AG04449 (cell line): ENCODE measurements at regions of chr5 and their contacts with region 1.

Region 1: GRCh38 chr5:140632150-140633020 is 590 bp downstream of the CD14 start:
- DNase-seq: no peak
- H3K4me3 ChIP-seq: peak overlapping the region; percentile 56
- CTCF ChIP-seq: no peak

Region 2: DNA sequence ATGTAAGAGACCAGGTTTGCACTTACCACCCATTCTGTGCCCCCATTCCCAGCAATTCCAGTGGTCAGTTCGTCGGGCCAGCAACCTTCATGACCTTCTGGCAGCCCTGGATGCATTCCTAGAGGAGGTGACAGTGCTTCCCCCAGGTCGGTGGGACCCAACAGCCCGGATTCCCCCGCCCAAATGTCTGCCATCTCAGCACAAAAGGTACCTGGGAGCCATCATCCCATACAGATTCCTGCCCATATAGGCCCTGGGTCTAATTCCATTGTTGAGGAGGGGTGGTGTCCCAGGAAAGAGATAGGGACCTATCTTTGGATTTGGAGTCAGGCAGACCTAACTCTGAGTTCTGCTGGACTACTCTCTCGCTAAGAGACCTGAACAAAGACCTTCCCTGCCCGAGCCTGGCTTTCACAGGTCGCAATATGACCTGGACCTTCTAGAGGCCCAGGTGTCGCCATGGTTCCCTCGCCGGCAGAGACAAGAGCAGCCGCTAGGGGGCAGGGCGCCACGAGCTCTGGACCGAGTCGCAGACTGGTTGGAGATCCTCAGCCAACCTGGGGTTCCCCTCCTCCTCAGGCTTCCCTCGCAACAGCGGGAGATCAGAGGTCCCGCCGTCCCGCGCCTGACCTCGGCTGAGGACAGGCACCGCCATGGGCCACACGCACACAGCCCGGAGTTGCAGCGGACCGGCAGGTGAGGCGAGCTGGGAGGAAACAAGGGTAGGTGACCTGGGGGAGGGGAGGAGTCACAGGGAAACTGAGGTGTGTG is 269.3 kb before region 1 on chr5:
- CTCF ChIA-PET with region 1: interaction called, 14 read pairs
- POLR2A ChIA-PET with region 1: no interaction called
- DNase-seq: no peak
- H3K4me3 ChIP-seq: peak overlapping the region; percentile 54
- CTCF ChIP-seq: peak; percentile 98

Region 3: GRCh38 chr5:140497897-140498296 is 134.5 kb before region 1 on chr5:
- CTCF ChIA-PET with region 1: no interaction called
- POLR2A ChIA-PET with region 1: no interaction called
- DNase-seq: no peak
- H3K4me3 ChIP-seq: no peak overlapping the region
- CTCF ChIP-seq: no peak

Region 4: GRCh38 chr5:140547508-140548299 is 84.7 kb before region 1 on chr5 and contains the start of gene EIF4EBP3:
- CTCF ChIA-PET with region 1: interaction called, 36 read pairs
- POLR2A ChIA-PET with region 1: interaction called, 3 read pairs
- DNase-seq: peak; percentile 77
- H3K4me3 ChIP-seq: peak within 1 kb of the TSS; percentile 49
- CTCF ChIP-seq: peak; percentile 70

Region 5: GRCh38 chr5:140557136-140557805 is 75.1 kb before region 1 on chr5 and contains the start of gene SRA1:
- CTCF ChIA-PET with region 1: interaction called, 16 read pairs
- POLR2A ChIA-PET with region 1: interaction called, 3 read pairs
- DNase-seq: no peak
- H3K4me3 ChIP-seq: peak within 1 kb of the TSS; percentile 86
- CTCF ChIP-seq: peak; percentile 4

Region 6: GRCh38 chr5:140564196-140565023 is 68.0 kb before region 1 on chr5 and contains the starts of genes APBB3 and SLC35A4:
- CTCF ChIA-PET with region 1: interaction called, 13 read pairs
- POLR2A ChIA-PET with region 1: no interaction called
- DNase-seq: peak; percentile 94
- H3K4me3 ChIP-seq: peak within 1 kb of the TSS; percentile 96
- CTCF ChIP-seq: no peak

Region 7: GRCh38 chr5:140575309-140575708 is 57.1 kb before region 1 on chr5:
- CTCF ChIA-PET with region 1: interaction called, 20 read pairs
- POLR2A ChIA-PET with region 1: no interaction called
- DNase-seq: no peak
- H3K4me3 ChIP-seq: no peak overlapping the region
- CTCF ChIP-seq: peak; percentile 33

Region 8: GRCh38 chr5:140672455-140673186 is 40.2 kb after region 1 on chr5:
- CTCF ChIA-PET with region 1: no interaction called
- POLR2A ChIA-PET with region 1: no interaction called
- DNase-seq: no peak
- H3K4me3 ChIP-seq: no peak overlapping the region
- CTCF ChIP-seq: no peak